Mammary epithelial cell (primary cell): ENCODE measurements at regions of chr19 and their contacts with region 1.

Region 1: DNA sequence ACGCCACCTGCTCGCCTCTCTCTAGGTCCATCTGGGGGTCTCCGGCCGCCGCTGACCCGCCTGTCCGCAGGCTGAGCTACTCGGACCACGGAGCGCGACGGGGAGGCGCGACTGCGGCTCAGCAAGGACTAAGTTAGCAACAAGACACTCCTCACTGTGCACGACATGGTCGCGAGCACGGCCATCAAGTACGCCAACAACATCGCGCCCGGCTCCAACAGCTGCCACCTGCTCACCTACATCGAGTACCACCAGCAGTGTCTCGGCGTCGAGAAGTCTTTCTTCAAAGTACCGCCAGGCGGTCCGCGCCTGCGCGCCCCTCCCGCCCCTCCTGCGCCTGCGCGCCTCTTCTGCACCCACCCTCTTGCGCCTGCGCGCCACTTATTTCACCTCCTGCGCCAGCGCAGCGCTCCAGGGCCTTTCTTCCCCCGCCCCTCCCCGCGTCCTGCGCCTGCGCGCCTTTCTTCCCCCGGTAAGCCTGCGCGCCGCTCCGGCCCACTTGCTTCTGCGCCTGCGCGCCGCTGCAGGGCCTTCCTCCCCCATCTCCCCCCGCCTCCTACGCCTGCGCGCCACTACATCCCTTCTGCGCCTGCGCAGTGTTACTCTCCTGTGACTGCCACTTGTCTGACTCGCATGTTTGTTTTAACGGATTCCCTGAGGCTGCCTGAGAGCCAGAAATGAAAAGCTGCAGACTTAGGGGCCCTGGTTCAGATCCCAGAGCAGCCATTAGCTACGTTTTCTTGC is 63.9 kb downstream of the ACSBG2 start:
- DNase-seq: peak; percentile 98
- H3K4me3 ChIP-seq: peak overlapping the region; percentile 79 to 100 (median 95)
- H3K27ac ChIP-seq: peak overlapping the region; percentile 2
- H3K4me1 ChIP-seq: peaks cover 5% of the 10 kb centered on the region
- H3K27me3 ChIP-seq: no peaks in the 10 kb centered on the region
- CTCF ChIP-seq: peak; percentile 16 to 36

Region 2: GRCh38 chr19:6150289-6150688 is 49.1 kb before region 1 on chr19:
- CTCF ChIA-PET with region 1: no interaction called
- dilution Hi-C with region 1: loop called (anchors 5 kb)
- in situ Hi-C with region 1: no loop called
- intact Hi-C with region 1: no loop called
- DNase-seq: no peak
- H3K4me3 ChIP-seq: no peak overlapping the region
- H3K27ac ChIP-seq: no peak overlapping the region
- H3K4me1 ChIP-seq: no peaks in the 10 kb centered on the region
- H3K27me3 ChIP-seq: no peaks in the 10 kb centered on the region
- CTCF ChIP-seq: no peak